Activated T-helper 1 cell treated with anti-CD3 and anti-CD28 coated beads, Interleukin-12 subunit alpha, Interleukin-12 subunit beta, Interleukin-2, Interleukin-4 antibody, amounts not matched to agents 30 ng/mL and 10 ng/mL and 1 ng/mL, durations not matched to agents 14 hours and 24 hours and 36 hours (primary cell): ENCODE measurements at regions of chr4 and their contacts with region 1.

Region 1: GRCh38 chr4:54547299-54548097 is 110.3 kb upstream of the KIT start:
- DNase-seq: no peak
- H3K4me3 Mint-ChIP-seq: peak overlapping the region; percentile 20
- H3K27ac Mint-ChIP-seq: peak overlapping the region; percentile 90
- H3K4me1 Mint-ChIP-seq: peaks cover 9% of the 10 kb centered on the region
- H3K27me3 Mint-ChIP-seq: peaks cover 2% of the 10 kb centered on the region

Region 2: DNA sequence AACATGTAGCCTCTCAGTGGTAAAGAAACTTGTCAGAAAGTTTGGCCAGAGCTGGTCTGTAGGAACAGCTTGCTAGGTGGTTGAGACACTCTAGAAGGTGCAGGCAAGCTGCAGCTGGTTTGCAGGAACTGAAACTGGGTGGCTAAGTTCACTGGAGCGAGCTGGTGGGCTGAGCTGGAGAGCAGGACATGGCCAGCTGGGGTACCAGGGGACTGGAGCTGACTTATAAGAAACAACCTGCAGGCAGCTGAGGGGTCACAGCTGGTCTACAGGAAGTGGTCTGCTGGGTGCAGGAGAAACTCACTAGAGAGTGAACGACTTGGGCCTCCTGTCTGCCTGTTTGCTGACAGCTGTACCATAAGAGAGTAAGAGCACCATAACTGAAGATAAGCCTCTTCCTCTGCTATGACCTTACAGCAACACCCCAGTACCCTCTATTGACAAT is 799.1 kb before region 1 on chr4:
- intact Hi-C with region 1: no loop called
- DNase-seq: no peak
- H3K4me3 Mint-ChIP-seq: no peak overlapping the region
- H3K27ac Mint-ChIP-seq: no peak overlapping the region
- H3K4me1 Mint-ChIP-seq: no peaks in the 10 kb centered on the region
- H3K27me3 Mint-ChIP-seq: peaks cover 1% of the 10 kb centered on the region

Region 3: DNA sequence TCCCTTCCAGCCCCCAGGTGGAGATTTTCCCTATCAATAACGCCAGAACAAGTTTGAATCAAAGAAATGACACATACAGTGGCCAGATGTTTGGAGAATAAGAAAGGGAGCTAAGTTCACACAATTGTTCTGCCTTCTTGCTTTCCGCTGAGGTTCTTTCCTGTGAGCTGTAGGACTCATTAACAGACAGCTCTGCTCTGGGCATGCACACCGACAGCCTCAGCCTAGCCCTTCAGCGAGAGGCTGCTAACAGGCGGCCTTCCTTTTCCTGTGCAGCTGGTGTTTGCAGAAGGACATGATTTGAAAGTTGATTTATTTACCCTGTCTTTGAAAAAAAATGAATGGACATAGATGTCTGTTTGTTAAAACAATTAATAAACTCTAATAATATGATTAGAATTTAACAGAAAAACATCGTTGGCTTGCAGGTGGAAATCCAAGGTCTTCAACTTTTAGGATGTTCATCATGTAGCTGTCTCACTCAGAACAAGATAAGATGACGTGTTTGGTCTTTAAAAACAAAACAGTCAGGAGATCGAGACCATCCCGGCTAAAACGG is 394.6 kb after region 1 on chr4:
- intact Hi-C with region 1: loop called (anchors 5 kb)
- DNase-seq: peak; percentile 16
- H3K4me3 Mint-ChIP-seq: peak overlapping the region; percentile 43
- H3K27ac Mint-ChIP-seq: peak overlapping the region; percentile 38
- H3K4me1 Mint-ChIP-seq: peaks cover 34% of the 10 kb centered on the region
- H3K27me3 Mint-ChIP-seq: no peaks in the 10 kb centered on the region